H1 (cell line): ENCODE measurements at regions of chr19 and their contacts with region 1.

Region 1: GRCh38 chr19:3984908-3985642 is at the start of gene EEF2:
- DNase-seq: peak in 1 of 2 experiments; percentile 93
- H3K4me3 ChIP-seq: peak within 1 kb of the TSS; percentile 79 to 99 (median 98)
- H3K27ac ChIP-seq: peak within 1 kb of the TSS; percentile 84
- H3K4me1 ChIP-seq: peaks cover 2 to 16% (median 10%) of the 10 kb centered on the region in 4 experiments
- H3K27me3 ChIP-seq: no peaks in the 10 kb centered on the region
- CTCF ChIP-seq: no peak; a peak in 1 of 4 replicates
- EP300 ChIP-seq: peak in 1 of 2 experiments; percentile 24; a peak in 1 of 3 replicates
- POLR2A ChIP-seq: peak; percentile 100
- RAD21 ChIP-seq: no peak
- total RNA-seq, gene EEF2: 3,380 and 3,443 TPM in 2 replicates

Region 2: DNA sequence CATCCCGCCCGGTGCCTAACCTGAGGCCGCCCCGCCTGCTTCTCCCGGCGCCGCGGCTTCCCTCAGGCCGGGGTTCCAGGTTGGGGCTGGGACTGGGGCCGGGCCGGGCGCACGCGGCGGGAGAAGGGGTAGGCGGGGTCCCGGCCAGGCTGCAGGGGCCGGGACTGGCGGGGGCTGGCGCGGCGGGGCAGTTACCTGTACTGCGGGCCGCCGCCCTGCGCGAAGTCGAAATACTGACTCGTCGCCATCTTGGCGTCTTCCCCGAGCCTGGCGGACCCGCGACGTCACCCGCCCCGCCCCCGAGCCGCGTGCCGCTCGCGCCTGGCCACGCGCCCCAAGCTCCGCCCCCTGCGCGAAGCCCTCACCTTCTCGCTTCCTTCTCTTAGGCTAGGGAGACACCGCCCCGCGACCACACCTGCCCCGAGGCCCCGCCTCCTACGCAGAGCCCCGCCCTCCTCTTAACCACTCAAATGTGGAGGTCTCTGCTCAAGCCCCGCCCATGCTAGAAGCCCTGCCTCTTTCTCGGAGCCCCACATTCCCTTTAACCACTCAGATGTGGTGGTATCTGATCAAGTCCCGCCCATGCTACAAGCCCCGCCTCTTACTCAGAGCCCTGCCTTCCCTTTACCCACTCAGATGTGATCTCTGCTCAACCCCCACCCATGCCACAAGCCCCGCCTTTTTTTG is 116.2 kb before region 1 on chr19 and contains the start of gene ZFR2:
- CTCF ChIA-PET with region 1: interaction called, 3 read pairs
- POLR2A ChIA-PET with region 1: interaction called, 10 read pairs
- DNase-seq: peak in 1 of 2 experiments; percentile 91
- H3K4me3 ChIP-seq: peak within 1 kb of the TSS; percentile 23 to 75 (median 42)
- H3K27ac ChIP-seq: no peak within 1 kb of the TSS; the same call in 1 of the 2 replicates
- H3K4me1 ChIP-seq: peaks cover 0 to 13% (median 8%) of the 10 kb centered on the region in 4 experiments; a peak in 5 of 7 replicates
- H3K27me3 ChIP-seq: peaks cover 0 to 18% (median 13%) of the 10 kb centered on the region in 4 experiments; a peak in 6 of 7 replicates
- CTCF ChIP-seq: no peak
- EP300 ChIP-seq: no peak
- POLR2A ChIP-seq: no peak
- RAD21 ChIP-seq: no peak
- total RNA-seq, gene ZFR2: 14.5 TPM in 2 replicates

Region 3: DNA sequence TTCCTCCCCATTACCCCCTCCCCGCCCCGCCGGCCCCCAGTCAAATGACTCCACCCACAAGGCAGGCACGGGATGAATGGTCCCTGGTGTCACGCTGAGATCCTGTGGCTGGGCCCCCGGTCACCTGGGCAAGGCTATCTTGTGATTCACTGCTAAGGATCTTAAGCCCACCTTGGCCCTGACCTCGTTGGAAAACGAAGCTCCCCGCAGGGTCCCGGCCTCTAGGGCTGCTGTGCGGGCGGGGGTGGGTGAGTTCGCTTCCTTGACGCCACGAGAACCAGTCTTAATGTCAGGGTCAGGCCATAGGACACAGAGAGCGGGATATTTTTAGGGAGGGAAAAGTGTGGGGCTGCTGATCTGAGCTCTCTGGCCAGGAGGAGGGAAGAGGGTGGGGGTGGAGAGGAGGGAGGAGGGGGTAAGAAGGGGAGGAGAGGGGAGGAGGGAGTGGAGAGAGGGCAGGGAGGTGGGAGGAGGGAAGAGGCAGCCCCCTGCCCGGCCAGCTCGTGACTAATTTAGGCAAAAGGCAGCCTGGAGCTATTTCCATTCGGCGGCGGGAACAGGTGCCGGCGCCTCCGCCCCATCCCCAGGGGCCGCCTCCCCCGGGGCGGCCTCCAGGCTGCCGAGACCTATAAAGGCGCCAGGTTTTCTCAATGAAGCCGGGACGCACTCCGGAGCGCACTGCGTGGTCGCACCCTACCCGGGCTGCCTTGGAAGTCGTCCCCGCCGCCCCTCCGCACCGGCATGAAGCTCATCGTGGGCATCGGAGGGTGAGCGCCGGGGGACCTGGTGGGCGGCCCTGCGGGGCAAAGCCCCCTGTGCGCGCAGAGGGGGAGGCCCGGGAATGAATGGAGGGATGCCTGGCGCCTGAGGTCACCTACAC is 51.9 kb before region 1 on chr19 and contains the start of gene NMRK2:
- CTCF ChIA-PET with region 1: no interaction called
- POLR2A ChIA-PET with region 1: interaction called, 50 read pairs
- DNase-seq: peak; percentile 79 to 88
- H3K4me3 ChIP-seq: peak within 1 kb of the TSS; percentile 75 to 96 (median 87)
- H3K27ac ChIP-seq: peak within 1 kb of the TSS; percentile 92; the same call in 1 of the 2 replicates
- H3K4me1 ChIP-seq: peaks cover 0 to 2% (median 0%) of the 10 kb centered on the region in 4 experiments; a peak in 1 of 7 replicates
- H3K27me3 ChIP-seq: no peaks in the 10 kb centered on the region; a peak in 1 of 7 replicates
- CTCF ChIP-seq: no peak
- EP300 ChIP-seq: 0 out of 3 replicates have a peak, but pooled peaks of 1 of the 2 experiments have one; percentile 19
- POLR2A ChIP-seq: peak in 1 of 2 experiments; percentile 85; a peak in 2 of 3 replicates
- RAD21 ChIP-seq: no peak
- total RNA-seq, gene NMRK2: 86.2 and 87.4 TPM in 2 replicates

Region 4: GRCh38 chr19:3995627-3996026 is 10.6 kb after region 1 on chr19:
- CTCF ChIA-PET with region 1: interaction called, 3 read pairs
- POLR2A ChIA-PET with region 1: interaction called, 69 read pairs
- DNase-seq: no peak
- H3K4me3 ChIP-seq: no peak overlapping the region
- H3K27ac ChIP-seq: no peak overlapping the region
- H3K4me1 ChIP-seq: no peaks in the 10 kb centered on the region
- H3K27me3 ChIP-seq: no peaks in the 10 kb centered on the region
- CTCF ChIP-seq: no peak
- EP300 ChIP-seq: no peak
- POLR2A ChIP-seq: no peak
- RAD21 ChIP-seq: no peak

Region 5: DNA sequence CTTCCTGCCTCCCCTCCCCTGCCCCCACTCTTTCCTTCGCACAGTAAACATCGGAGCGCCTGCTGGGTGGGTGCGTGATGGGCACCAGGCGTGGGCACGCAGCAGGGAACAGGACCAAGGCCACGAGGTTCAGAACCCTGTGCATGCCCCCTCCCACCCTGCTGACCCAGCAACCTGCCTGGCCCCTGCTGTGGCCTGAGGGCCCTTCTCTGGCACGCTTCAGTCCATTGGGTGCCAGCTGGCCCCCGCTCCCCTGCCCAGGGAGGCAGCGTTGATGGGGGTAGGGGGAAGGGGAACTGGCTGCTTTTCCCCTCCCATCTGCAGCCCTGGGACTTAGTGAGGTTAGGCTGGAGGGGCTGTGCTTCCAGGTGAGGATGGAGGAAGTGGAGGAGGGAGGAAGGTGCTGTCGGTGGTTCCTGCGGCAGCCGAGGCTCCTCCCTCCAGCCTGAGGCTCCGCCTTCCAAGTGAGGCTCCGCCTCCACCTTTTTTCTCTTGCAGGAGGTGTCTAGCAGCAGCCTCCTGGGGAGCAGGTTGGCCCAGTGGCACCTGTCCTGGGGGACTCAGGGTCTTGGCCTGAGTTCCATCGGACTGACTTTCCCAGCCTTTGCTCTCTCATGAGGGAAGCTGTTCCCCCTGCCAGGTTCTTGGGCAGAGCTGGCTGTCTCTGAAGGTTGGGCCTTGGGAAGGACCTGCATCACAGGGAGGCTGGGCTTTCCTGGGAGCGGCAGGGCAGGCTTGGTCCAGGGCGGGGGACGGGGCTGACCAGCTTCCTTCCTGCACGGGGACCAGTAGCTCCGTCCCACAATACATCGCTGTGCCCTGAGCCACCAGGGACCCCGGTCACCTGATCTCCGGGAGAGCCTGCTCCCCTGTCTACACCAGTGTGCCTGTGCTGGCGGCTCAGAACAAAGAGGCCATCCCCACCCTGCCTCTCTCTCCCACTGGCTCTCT is 29.7 kb after region 1 on chr19:
- CTCF ChIA-PET with region 1: no interaction called
- POLR2A ChIA-PET with region 1: interaction called, 125 read pairs
- DNase-seq: peak in 1 of 2 experiments; percentile 87
- H3K4me3 ChIP-seq: no peak overlapping the region
- H3K27ac ChIP-seq: no peak overlapping the region
- H3K4me1 ChIP-seq: peaks cover 0 to 3% (median under 1%) of the 10 kb centered on the region in 4 experiments; a peak in 4 of 7 replicates
- H3K27me3 ChIP-seq: no peaks in the 10 kb centered on the region
- CTCF ChIP-seq: no peak
- EP300 ChIP-seq: no peak
- POLR2A ChIP-seq: no peak
- RAD21 ChIP-seq: no peak

Region 6: GRCh38 chr19:4058034-4058692 is 73.1 kb after region 1 on chr19:
- CTCF ChIA-PET with region 1: no interaction called
- POLR2A ChIA-PET with region 1: interaction called, 10 read pairs
- DNase-seq: no peak
- H3K4me3 ChIP-seq: no peak overlapping the region
- H3K27ac ChIP-seq: 0 out of 2 replicates have a peak overlapping the region, but pooled peaks have one; percentile 33
- H3K4me1 ChIP-seq: peaks cover 0 to 40% (median 17%) of the 10 kb centered on the region in 4 experiments; a peak in 5 of 7 replicates
- H3K27me3 ChIP-seq: no peaks in the 10 kb centered on the region
- CTCF ChIP-seq: no peak
- EP300 ChIP-seq: no peak
- POLR2A ChIP-seq: no peak
- RAD21 ChIP-seq: no peak